Activated CD8-positive, alpha-beta T cell treated with anti-CD3 and anti-CD28 coated beads for 36 hours (primary cell): ENCODE measurements at regions of chr12 and their contacts with region 1.

Region 1: GRCh38 chr12:100672075-100672592 is 98.7 kb downstream of the GAS2L3 start:
- DNase-seq: peak; percentile 55
- ATAC-seq: peak; percentile 73
- H3K4me3 Mint-ChIP-seq: no peak overlapping the region
- H3K27ac Mint-ChIP-seq: no peak overlapping the region
- H3K4me1 Mint-ChIP-seq: no peaks in the 10 kb centered on the region
- H3K27me3 Mint-ChIP-seq: peaks cover 4% of the 10 kb centered on the region
- CTCF ChIP-seq: peak; percentile 67

Region 2: GRCh38 chr12:100234598-100235304 is 437.4 kb before region 1 on chr12:
- CTCF ChIA-PET with region 1: interaction called, 11 read pairs
- POLR2A ChIA-PET with region 1: no interaction called
- intact Hi-C with region 1: no loop called
- DNase-seq: peak; percentile 7
- ATAC-seq: no peak
- H3K4me3 Mint-ChIP-seq: no peak overlapping the region
- H3K27ac Mint-ChIP-seq: no peak overlapping the region
- H3K4me1 Mint-ChIP-seq: no peaks in the 10 kb centered on the region
- H3K27me3 Mint-ChIP-seq: no peaks in the 10 kb centered on the region
- CTCF ChIP-seq: peak; percentile 61

Region 3: GRCh38 chr12:100348657-100349454 is 323.3 kb before region 1 on chr12:
- CTCF ChIA-PET with region 1: interaction called, 10 read pairs
- POLR2A ChIA-PET with region 1: no interaction called
- intact Hi-C with region 1: loop called (anchors 10 kb)
- DNase-seq: no peak
- ATAC-seq: no peak
- H3K4me3 Mint-ChIP-seq: no peak overlapping the region
- H3K27ac Mint-ChIP-seq: no peak overlapping the region
- H3K4me1 Mint-ChIP-seq: no peaks in the 10 kb centered on the region
- H3K27me3 Mint-ChIP-seq: peaks cover 5% of the 10 kb centered on the region
- CTCF ChIP-seq: no peak

Region 4: DNA sequence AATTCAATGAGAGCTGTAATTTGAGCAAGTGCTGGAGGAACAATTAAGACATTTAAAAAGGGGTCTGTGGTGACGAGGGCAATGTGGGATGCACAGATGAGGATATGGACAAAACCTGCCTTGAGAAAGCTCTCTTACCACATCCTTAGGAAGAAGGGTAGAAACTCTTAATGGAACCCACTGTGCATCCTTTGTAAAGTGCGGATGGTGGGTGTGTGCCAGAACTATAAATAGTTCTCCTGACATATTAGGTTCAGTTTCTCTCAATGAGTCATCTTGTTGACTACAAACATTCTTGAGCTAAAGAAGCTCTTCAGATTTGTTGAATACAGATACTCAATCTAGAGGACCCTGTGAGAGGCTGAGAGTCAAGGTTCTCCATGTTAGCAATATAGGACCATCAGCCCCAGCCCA is 16.3 kb after region 1 on chr12:
- CTCF ChIA-PET with region 1: interaction called, 13 read pairs
- POLR2A ChIA-PET with region 1: no interaction called
- intact Hi-C with region 1: no loop called
- DNase-seq: no peak
- ATAC-seq: no peak
- H3K4me3 Mint-ChIP-seq: no peak overlapping the region
- H3K27ac Mint-ChIP-seq: no peak overlapping the region
- H3K4me1 Mint-ChIP-seq: no peaks in the 10 kb centered on the region
- H3K27me3 Mint-ChIP-seq: no peaks in the 10 kb centered on the region
- CTCF ChIP-seq: no peak

Region 5: GRCh38 chr12:100703337-100703736 is 31.2 kb after region 1 on chr12:
- CTCF ChIA-PET with region 1: interaction called, 11 read pairs
- POLR2A ChIA-PET with region 1: no interaction called
- intact Hi-C with region 1: no loop called
- DNase-seq: no peak
- ATAC-seq: no peak
- H3K4me3 Mint-ChIP-seq: no peak overlapping the region
- H3K27ac Mint-ChIP-seq: no peak overlapping the region
- H3K4me1 Mint-ChIP-seq: no peaks in the 10 kb centered on the region
- H3K27me3 Mint-ChIP-seq: peaks cover 3% of the 10 kb centered on the region
- CTCF ChIP-seq: no peak

Region 6: DNA sequence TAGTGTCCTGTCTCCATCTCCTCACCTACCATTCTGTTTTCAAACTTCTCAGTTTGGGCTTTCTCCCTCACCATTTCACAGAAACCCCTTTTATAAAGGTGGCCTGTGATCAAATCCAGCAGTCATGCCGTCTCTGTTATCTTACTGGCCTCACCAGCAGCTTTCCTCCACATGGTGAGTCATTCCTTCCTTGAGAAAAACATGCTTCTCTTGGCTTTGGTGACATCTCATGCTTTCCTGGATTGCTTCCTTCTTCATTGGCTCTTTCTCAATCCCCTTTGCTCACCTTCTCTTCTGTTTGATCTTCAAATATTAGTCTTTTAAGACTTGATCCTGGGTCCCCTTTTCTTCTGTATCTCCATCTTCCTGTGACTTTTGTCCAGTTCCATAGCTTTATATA is 287.3 kb after region 1 on chr12:
- CTCF ChIA-PET with region 1: no interaction called
- POLR2A ChIA-PET with region 1: no interaction called
- intact Hi-C with region 1: no loop called
- DNase-seq: no peak
- ATAC-seq: no peak
- H3K4me3 Mint-ChIP-seq: no peak overlapping the region
- H3K27ac Mint-ChIP-seq: no peak overlapping the region
- H3K4me1 Mint-ChIP-seq: no peaks in the 10 kb centered on the region
- H3K27me3 Mint-ChIP-seq: peaks cover 1% of the 10 kb centered on the region
- CTCF ChIP-seq: no peak